ENCODE measurements at regions of chr3 and their contacts with region 1.

Region 1: GRCh38 chr3:102229062-102229655 is 205.7 kb upstream of the ZPLD1 start:
- DNase-seq: peak; percentile 86
- H3K4me3 Mint-ChIP-seq: no peak overlapping the region
- H3K27ac Mint-ChIP-seq: no peak overlapping the region
- H3K4me1 Mint-ChIP-seq: peaks cover 15% of the 10 kb centered on the region
- H3K27me3 Mint-ChIP-seq: peaks cover 5% of the 10 kb centered on the region

Region 2: DNA sequence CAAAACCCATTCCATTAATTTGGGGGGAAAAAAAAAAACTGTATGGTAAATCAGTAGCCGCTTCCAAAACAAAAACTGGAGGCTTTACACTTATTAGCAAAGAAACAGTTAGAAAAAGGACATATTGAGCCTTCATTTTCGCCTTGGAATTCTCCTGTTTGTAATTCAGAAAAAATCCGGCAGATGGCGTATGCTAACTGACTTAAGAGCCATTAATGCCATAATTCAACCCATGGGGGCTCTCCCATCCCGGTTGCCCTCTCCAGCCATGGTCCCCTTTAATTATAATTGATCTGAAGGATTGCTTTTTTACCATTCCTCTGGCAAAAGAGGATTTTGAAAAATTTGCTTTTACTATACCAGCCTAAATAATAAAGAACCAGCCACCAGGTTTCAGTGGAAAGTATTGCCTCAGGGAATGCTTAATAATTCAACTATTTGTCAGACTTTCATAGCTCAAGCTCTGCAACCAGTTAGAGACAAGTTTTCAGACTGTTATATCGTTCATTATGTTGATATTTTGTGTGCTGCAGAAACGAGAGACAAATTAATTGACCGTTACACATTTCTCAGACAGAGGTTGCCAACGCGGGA is 533.3 kb before region 1 on chr3:
- CTCF ChIA-PET with region 1: no interaction called
- POLR2A ChIA-PET with region 1: no interaction called
- intact Hi-C with region 1: loop called (anchors 2 kb)
- DNase-seq: no peak
- H3K4me3 Mint-ChIP-seq: no peak overlapping the region
- H3K27ac Mint-ChIP-seq: no peak overlapping the region
- H3K4me1 Mint-ChIP-seq: peaks cover 8% of the 10 kb centered on the region
- H3K27me3 Mint-ChIP-seq: no peaks in the 10 kb centered on the region

Region 3: GRCh38 chr3:101809178-101810021 is 419.8 kb before region 1 on chr3:
- CTCF ChIA-PET with region 1: interaction called, 391 read pairs
- POLR2A ChIA-PET with region 1: no interaction called
- intact Hi-C with region 1: loop called (anchors 1 kb)
- DNase-seq: peak; percentile 31
- H3K4me3 Mint-ChIP-seq: no peak overlapping the region
- H3K27ac Mint-ChIP-seq: no peak overlapping the region
- H3K4me1 Mint-ChIP-seq: peaks cover 43% of the 10 kb centered on the region
- H3K27me3 Mint-ChIP-seq: no peaks in the 10 kb centered on the region

Region 4: GRCh38 chr3:101827211-101828174 is 401.7 kb before region 1 on chr3:
- CTCF ChIA-PET with region 1: interaction called, 22 read pairs
- POLR2A ChIA-PET with region 1: no interaction called
- intact Hi-C with region 1: loop called (anchors 5 kb)
- DNase-seq: peak; percentile 95
- H3K4me3 Mint-ChIP-seq: peak overlapping the region; percentile 85
- H3K27ac Mint-ChIP-seq: peak overlapping the region; percentile 96
- H3K4me1 Mint-ChIP-seq: peaks cover 63% of the 10 kb centered on the region
- H3K27me3 Mint-ChIP-seq: no peaks in the 10 kb centered on the region

Region 5: GRCh38 chr3:101988591-101988990 is 240.6 kb before region 1 on chr3:
- CTCF ChIA-PET with region 1: interaction called, 4 read pairs
- POLR2A ChIA-PET with region 1: no interaction called
- intact Hi-C with region 1: loop called (anchors 5 kb)
- DNase-seq: peak; percentile 40
- H3K4me3 Mint-ChIP-seq: no peak overlapping the region
- H3K27ac Mint-ChIP-seq: no peak overlapping the region
- H3K4me1 Mint-ChIP-seq: peaks cover 29% of the 10 kb centered on the region
- H3K27me3 Mint-ChIP-seq: peaks cover 11% of the 10 kb centered on the region

Region 6: DNA sequence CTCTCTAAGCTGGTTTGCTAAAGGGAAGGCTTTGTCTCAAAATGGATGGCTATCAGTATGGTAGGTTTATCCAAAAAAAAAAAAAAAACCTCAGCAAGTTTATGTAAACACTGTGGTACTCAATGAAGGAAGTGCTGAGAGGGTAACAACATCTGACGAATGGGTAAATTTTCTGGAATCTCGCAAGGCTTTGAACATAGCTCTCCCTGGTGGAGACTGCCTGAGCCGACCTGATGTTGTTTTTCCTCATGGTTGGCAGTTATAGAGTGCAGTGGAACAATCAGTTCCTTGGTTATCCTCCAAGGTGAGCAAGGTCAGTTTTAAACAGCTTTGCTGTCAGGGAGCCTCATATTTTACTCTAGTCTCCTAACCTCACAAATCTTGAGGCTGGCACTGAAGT is 300.3 kb after region 1 on chr3:
- CTCF ChIA-PET with region 1: interaction called, 171 read pairs
- POLR2A ChIA-PET with region 1: no interaction called
- intact Hi-C with region 1: no loop called
- DNase-seq: no peak
- H3K4me3 Mint-ChIP-seq: no peak overlapping the region
- H3K27ac Mint-ChIP-seq: no peak overlapping the region
- H3K4me1 Mint-ChIP-seq: peaks cover 3% of the 10 kb centered on the region
- H3K27me3 Mint-ChIP-seq: peaks cover 2% of the 10 kb centered on the region

Region 7: GRCh38 chr3:102673271-102674115 is 444.3 kb after region 1 on chr3:
- CTCF ChIA-PET with region 1: interaction called, 26 read pairs
- POLR2A ChIA-PET with region 1: no interaction called
- intact Hi-C with region 1: no loop called
- DNase-seq: peak; percentile 72
- H3K4me3 Mint-ChIP-seq: no peak overlapping the region
- H3K27ac Mint-ChIP-seq: no peak overlapping the region
- H3K4me1 Mint-ChIP-seq: no peaks in the 10 kb centered on the region
- H3K27me3 Mint-ChIP-seq: peaks cover 12% of the 10 kb centered on the region

Region 8: GRCh38 chr3:102715030-102715697 is 486.0 kb after region 1 on chr3:
- CTCF ChIA-PET with region 1: no interaction called
- POLR2A ChIA-PET with region 1: no interaction called
- intact Hi-C with region 1: no loop called
- DNase-seq: no peak
- H3K4me3 Mint-ChIP-seq: no peak overlapping the region
- H3K27ac Mint-ChIP-seq: no peak overlapping the region
- H3K4me1 Mint-ChIP-seq: peaks cover 9% of the 10 kb centered on the region
- H3K27me3 Mint-ChIP-seq: peaks cover 8% of the 10 kb centered on the region